Activated CD4-positive, alpha-beta T cell treated with anti-CD3 and anti-CD28 coated beads for 36 hours (primary cell): ENCODE measurements at regions of chr2 and their contacts with region 1.

Region 1: DNA sequence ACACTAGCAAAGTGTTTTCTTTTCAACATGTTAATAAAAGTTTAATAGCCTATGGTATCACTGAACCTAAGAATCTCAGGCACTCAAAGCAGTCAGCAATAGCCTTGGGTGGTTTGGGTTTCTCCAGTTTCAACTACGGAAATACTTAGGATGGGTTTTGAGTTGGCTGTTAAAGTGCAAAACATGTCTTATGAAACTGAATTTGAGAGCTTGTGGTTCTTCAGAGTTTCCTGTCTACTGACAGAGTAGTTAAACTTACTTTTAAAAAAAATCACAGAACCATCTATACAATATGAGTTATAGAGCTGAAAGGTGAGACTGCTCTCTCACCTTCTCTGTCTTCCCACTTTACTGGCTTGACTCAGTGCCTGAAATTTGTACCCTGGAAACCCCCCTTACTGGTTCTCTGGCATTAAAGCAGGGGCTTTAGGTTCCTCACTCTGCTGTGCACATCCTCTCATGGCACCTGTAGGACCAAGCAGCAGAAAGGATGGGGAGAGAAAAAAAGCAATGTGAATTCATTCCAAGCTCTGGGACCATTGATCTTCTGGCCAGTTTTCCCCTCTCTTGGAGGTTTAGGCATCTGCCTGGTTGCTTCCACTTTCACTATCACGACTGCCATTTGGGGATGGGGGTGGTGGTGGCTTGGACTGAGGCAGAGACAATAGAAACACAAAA is 18.1 kb downstream of the CCDC141 start:
- DNase-seq: peak; percentile 57
- ATAC-seq: peak; percentile 95
- H3K4me3 Mint-ChIP-seq: peak overlapping the region; percentile 69
- H3K27ac Mint-ChIP-seq: peak overlapping the region; percentile 96
- H3K4me1 Mint-ChIP-seq: peaks cover 28% of the 10 kb centered on the region
- H3K27me3 Mint-ChIP-seq: no peaks in the 10 kb centered on the region

Region 2: GRCh38 chr2:178450774-178451525 is 580.9 kb before region 1 on chr2 and contains the starts of genes PJVK and PRKRA:
- CTCF ChIA-PET with region 1: no interaction called
- POLR2A ChIA-PET with region 1: no interaction called
- intact Hi-C with region 1: loop called in 1 of 2 experiments (anchors 2 kb)
- DNase-seq: peak; percentile 98
- ATAC-seq: peak; percentile 90
- H3K4me3 Mint-ChIP-seq: peak within 1 kb of the TSS; percentile 88
- H3K27ac Mint-ChIP-seq: peak within 1 kb of the TSS; percentile 96
- H3K4me1 Mint-ChIP-seq: peaks cover 27% of the 10 kb centered on the region
- H3K27me3 Mint-ChIP-seq: no peaks in the 10 kb centered on the region
- total RNA-seq, gene PJVK: 1.9 to 2.4 TPM
- total RNA-seq, gene PRKRA: 63.5 to 65.1 TPM

Region 3: DNA sequence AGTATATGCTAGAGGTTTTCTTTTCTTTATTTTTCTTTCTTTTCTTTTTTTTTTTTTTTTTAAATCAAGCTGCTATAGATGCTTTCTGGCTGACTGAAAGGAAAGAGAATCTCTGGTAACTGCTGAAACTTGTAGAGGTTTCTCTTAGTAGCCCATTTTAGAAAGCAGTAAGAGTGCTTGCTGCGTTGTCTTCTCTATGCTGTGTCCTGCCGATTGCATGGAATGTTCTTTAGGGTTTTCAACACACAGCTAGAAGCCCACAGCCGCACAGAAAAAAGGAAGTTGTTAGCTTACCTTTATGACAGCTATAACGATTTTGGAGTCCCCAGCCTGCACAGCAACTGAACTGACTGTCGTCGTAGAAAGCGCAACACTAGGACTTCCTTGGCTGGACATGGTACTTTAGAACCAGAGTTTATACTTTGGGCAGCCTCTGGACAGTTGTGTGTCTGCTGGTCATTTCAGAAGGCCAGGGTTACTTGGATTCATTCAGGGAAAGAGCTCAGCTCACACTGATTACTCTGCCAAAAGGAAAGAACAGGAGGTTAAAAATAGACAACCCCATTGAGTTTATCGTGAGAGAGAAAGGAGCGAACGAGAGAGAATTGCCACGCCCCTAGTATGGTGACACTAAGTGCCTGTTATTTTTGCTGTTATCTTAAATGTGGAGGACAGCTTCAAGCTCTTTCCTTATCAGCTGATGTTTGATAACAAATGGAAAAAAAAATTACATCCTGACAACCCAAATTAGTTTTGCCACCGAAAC is 17.9 kb after region 1 on chr2 and contains the start of gene CCDC141:
- CTCF ChIA-PET with region 1: interaction called, 3 read pairs
- POLR2A ChIA-PET with region 1: interaction called, 4 read pairs
- intact Hi-C with region 1: loop called in 1 of 2 experiments (anchors 2 kb)
- DNase-seq: peak; percentile 42
- ATAC-seq: peak; percentile 79
- H3K4me3 Mint-ChIP-seq: peak within 1 kb of the TSS; percentile 78
- H3K27ac Mint-ChIP-seq: peak within 1 kb of the TSS; percentile 85
- H3K4me1 Mint-ChIP-seq: peaks cover 49% of the 10 kb centered on the region
- H3K27me3 Mint-ChIP-seq: no peaks in the 10 kb centered on the region
- total RNA-seq, gene CCDC141: 2.6 to 4.3 TPM

Region 4: DNA sequence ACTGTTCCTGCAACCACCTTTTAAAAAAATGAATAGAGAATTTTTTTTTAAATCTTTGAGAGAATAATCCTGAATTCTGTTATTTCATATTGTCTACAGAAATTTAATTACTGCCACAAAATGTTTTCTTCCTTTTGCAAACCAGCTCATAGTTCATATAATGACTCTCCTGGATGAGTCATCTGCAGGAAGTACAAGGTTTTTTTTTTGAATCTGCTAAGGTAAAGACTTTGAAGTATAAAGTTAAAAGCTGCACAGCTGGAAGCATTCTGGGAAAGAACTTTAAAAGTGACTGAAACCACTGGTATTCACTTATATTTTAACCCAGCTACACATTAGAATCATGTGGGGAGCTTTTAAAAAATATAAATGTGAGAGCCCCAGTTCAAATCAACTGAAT is 207.3 kb after region 1 on chr2:
- CTCF ChIA-PET with region 1: no interaction called
- POLR2A ChIA-PET with region 1: no interaction called
- intact Hi-C with region 1: loop called in 1 of 2 experiments (anchors 5 kb)
- DNase-seq: no peak
- ATAC-seq: peak; percentile 88
- H3K4me3 Mint-ChIP-seq: no peak overlapping the region
- H3K27ac Mint-ChIP-seq: no peak overlapping the region
- H3K4me1 Mint-ChIP-seq: peaks cover 39% of the 10 kb centered on the region
- H3K27me3 Mint-ChIP-seq: peaks cover 2% of the 10 kb centered on the region

Region 5: DNA sequence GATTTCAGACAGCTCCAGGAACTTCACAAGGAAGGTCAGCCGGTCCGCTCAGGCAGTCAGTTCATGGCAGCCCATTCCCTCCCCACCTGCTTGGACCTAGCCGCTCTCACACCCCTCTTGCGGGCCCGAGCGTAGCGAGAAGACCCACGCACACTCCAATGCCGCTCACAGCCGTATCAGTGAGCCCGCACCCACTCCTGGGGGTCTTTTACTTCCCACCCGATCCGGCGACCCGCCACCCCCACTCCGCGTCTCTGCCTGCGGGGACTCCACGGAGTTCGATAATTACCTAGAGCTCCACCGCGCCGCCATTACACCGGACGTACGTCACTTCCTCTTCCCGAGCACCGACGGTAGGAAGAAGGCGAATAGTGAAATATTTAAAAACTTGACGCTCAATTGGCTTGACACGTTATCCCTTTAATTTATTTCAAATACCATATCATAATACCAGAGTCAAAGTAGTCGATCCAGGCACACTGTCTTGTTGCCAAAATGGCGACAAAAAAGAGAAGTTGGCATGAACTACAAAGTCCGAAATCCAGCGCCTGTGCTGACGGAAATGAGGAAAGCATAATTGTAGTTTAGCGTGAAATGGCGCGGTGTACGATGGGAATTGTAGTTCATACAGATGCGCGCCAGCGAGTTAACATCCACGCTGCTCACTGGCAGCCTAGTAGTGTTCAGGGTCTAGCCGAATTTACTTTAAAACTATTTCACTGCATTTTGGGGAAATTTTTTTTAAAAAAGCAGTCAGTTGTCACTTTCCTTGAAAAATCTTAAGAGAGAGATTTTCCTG is 975.1 kb after region 1 on chr2 and contains the start of gene CWC22:
- CTCF ChIA-PET with region 1: no interaction called
- POLR2A ChIA-PET with region 1: no interaction called
- intact Hi-C with region 1: loop called in 1 of 2 experiments (anchors 10 kb)
- DNase-seq: peak; percentile 91
- ATAC-seq: peak; percentile 98
- H3K4me3 Mint-ChIP-seq: peak within 1 kb of the TSS; percentile 92
- H3K27ac Mint-ChIP-seq: peak within 1 kb of the TSS; percentile 99
- H3K4me1 Mint-ChIP-seq: peaks cover 38% of the 10 kb centered on the region
- H3K27me3 Mint-ChIP-seq: no peaks in the 10 kb centered on the region
- total RNA-seq, gene CWC22: 25.3 to 31.0 TPM